CD4-positive, alpha-beta T cell (primary cell): ENCODE measurements at regions of chr7 and their contacts with region 1.

Region 1: DNA sequence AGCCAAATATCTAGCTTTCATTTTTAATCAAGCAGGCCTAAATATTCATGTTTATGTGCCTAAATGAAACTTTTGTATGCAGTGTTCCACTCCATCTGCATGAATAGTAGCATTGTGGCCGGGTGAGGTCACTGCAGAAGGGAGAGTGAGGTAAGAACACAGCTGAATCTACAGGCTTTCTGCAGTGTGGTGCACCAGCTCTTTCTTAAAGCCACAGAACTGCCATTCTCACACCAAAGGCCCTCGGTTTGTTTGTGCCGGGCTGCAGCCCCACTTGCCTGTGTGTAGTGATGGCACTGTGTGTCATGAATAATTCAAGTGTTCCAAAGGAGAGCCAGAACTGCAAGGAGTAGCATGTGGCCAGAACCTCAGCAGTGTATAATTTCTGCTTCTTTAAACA is 204.1 kb downstream of the TRIL start:
- DNase-seq: no peak
- ATAC-seq: no peak
- H3K4me3 ChIP-seq: no peak overlapping the region
- H3K4me3 Mint-ChIP-seq: no peak overlapping the region
- H3K27ac ChIP-seq: no peak overlapping the region
- H3K27ac Mint-ChIP-seq: no peak overlapping the region
- H3K4me1 ChIP-seq: no peaks in the 10 kb centered on the region
- H3K4me1 Mint-ChIP-seq: no peaks in the 10 kb centered on the region
- H3K27me3 ChIP-seq: no peaks in the 10 kb centered on the region
- H3K27me3 Mint-ChIP-seq: no peaks in the 10 kb centered on the region
- CTCF ChIP-seq: no peak

Region 2: GRCh38 chr7:28497009-28497408 is 257.0 kb before region 1 on chr7:
- CTCF ChIA-PET with region 1: no interaction called
- POLR2A ChIA-PET with region 1: no interaction called
- intact Hi-C with region 1: no loop called
- DNase-seq: no peak
- ATAC-seq: no peak
- H3K4me3 ChIP-seq: no peak overlapping the region
- H3K4me3 Mint-ChIP-seq: no peak overlapping the region
- H3K27ac ChIP-seq: no peak overlapping the region
- H3K27ac Mint-ChIP-seq: no peak overlapping the region
- H3K4me1 ChIP-seq: no peaks in the 10 kb centered on the region
- H3K4me1 Mint-ChIP-seq: no peaks in the 10 kb centered on the region
- H3K27me3 ChIP-seq: no peaks in the 10 kb centered on the region
- H3K27me3 Mint-ChIP-seq: no peaks in the 10 kb centered on the region
- CTCF ChIP-seq: no peak

Region 3: GRCh38 chr7:28808796-28809527 is 54.9 kb after region 1 on chr7:
- CTCF ChIA-PET with region 1: no interaction called
- POLR2A ChIA-PET with region 1: no interaction called
- intact Hi-C with region 1: no loop called
- DNase-seq: peak in 2 of 14 experiments; percentile 9 to 21
- ATAC-seq: no peak
- H3K4me3 ChIP-seq: no peak overlapping the region
- H3K4me3 Mint-ChIP-seq: no peak overlapping the region
- H3K27ac ChIP-seq: no peak overlapping the region
- H3K27ac Mint-ChIP-seq: no peak overlapping the region
- H3K4me1 ChIP-seq: no peaks in the 10 kb centered on the region
- H3K4me1 Mint-ChIP-seq: no peaks in the 10 kb centered on the region
- H3K27me3 ChIP-seq: no peaks in the 10 kb centered on the region
- H3K27me3 Mint-ChIP-seq: no peaks in the 10 kb centered on the region
- CTCF ChIP-seq: no peak

Region 4: GRCh38 chr7:29622335-29623265 is 868.6 kb after region 1 on chr7:
- CTCF ChIA-PET with region 1: no interaction called
- POLR2A ChIA-PET with region 1: no interaction called
- intact Hi-C with region 1: no loop called
- DNase-seq: no peak
- ATAC-seq: no peak
- H3K4me3 ChIP-seq: no peak overlapping the region
- H3K4me3 Mint-ChIP-seq: no peak overlapping the region
- H3K27ac ChIP-seq: no peak overlapping the region
- H3K27ac Mint-ChIP-seq: no peak overlapping the region
- H3K4me1 ChIP-seq: no peaks in the 10 kb centered on the region
- H3K4me1 Mint-ChIP-seq: no peaks in the 10 kb centered on the region
- H3K27me3 ChIP-seq: no peaks in the 10 kb centered on the region
- H3K27me3 Mint-ChIP-seq: peaks cover 26% of the 10 kb centered on the region
- CTCF ChIP-seq: no peak

Region 5: GRCh38 chr7:29955799-29956486 is 1201.9 kb after region 1 on chr7:
- CTCF ChIA-PET with region 1: no interaction called
- POLR2A ChIA-PET with region 1: no interaction called
- intact Hi-C with region 1: loop called in 1 of 2 experiments (anchors 10 kb)
- DNase-seq: peak in 4 of 14 experiments; percentile 9 to 45 (median 32)
- ATAC-seq: no peak
- H3K4me3 ChIP-seq: no peak overlapping the region
- H3K4me3 Mint-ChIP-seq: no peak overlapping the region
- H3K27ac ChIP-seq: no peak overlapping the region
- H3K27ac Mint-ChIP-seq: no peak overlapping the region
- H3K4me1 ChIP-seq: peaks cover 5% of the 10 kb centered on the region
- H3K4me1 Mint-ChIP-seq: peaks cover 16% of the 10 kb centered on the region
- H3K27me3 ChIP-seq: no peaks in the 10 kb centered on the region
- H3K27me3 Mint-ChIP-seq: no peaks in the 10 kb centered on the region
- CTCF ChIP-seq: no peak